ENCODE measurements at regions of chr9 and their contacts with region 1.

Region 1: GRCh38 chr9:37784616-37785483 is at the start of gene EXOSC3:
- DNase-seq: peak; percentile 84 to 95 (median 92)
- H3K4me3 ChIP-seq: peak within 1 kb of the TSS; percentile 71 to 100 (median 94)
- H3K27ac ChIP-seq: peak within 1 kb of the TSS in 58 of 59 donors; percentile 20 to 93 (median 79)
- H3K27me3 ChIP-seq: peaks cover 0 to 3% (median 0%) of the 10 kb centered on the region in 45 donors
- CTCF ChIP-seq: peak in 37 of 56 donors; percentile 6 to 59 (median 23)
- total RNA-seq, gene EXOSC3: 23.5 to 65.0 (median 36.8) TPM

Region 2: DNA sequence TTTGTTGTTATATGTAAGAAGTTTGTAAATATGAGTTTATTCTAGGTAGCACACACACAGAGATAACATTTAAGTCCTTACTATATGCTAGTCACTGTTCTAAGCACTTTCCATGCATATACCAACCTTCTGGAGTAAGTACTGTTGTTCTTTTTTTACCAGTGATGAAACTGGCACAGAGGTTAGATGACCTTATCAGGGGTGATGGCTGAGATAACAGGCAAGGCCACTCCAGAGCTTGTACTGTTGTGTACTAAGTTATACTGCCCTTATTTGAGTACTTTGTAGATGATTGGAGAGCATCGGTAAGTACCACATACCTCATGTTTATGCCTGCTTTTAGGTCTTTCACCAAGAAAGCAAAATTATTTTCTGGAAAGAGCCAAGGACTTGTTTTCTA is 292.9 kb before region 1 on chr9:
- intact Hi-C with region 1: loop called in 1 of 2 experiments (anchors 5 kb)
- DNase-seq: no peak
- H3K4me3 ChIP-seq: no peak overlapping the region
- H3K27ac ChIP-seq: no peak overlapping the region
- H3K27me3 ChIP-seq: no peaks in the 10 kb centered on the region
- CTCF ChIP-seq: no peak

Region 3: DNA sequence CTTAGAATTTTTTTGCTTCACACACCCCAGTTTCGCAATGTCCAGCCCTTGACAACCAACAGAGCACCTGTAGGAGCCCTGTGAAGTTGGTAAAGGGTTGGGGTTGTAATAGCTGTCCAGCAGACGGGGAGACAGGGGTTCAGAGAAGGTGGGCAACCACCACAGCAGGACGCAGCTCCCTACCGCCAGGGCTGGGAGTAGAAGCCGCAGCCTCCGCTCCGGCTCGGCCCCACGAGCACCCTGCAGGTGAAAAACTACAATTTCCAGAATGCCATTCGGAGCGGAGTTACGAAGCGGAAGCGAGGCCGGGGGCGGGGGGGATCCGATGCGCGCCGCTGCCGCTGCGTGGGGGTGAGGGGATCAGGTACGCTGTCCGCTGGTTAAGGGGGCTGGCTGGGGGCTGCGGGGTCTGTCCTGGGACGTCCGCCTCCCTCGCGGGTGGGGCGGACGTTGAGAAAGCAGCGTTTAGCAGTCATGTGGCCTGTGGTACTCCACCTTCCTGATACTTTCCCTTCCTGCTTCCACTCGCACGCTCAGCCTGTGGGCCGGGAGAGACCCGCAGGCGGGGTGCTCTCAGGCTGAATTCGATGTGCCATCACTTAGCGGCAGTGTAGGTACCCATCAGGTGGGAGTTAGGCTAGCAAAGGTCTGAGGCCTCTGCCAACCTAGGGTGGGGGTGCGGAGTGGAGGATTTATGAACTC is 31.2 kb before region 1 on chr9 and contains the start of gene TRMT10B:
- intact Hi-C with region 1: loop called in 1 of 2 experiments (anchors 5 kb)
- DNase-seq: peak; percentile 50 to 81 (median 63)
- H3K4me3 ChIP-seq: peak within 1 kb of the TSS; percentile 53 to 97 (median 86)
- H3K27ac ChIP-seq: peak within 1 kb of the TSS in 52 of 59 donors; percentile 7 to 89 (median 65)
- H3K27me3 ChIP-seq: no peaks in the 10 kb centered on the region
- CTCF ChIP-seq: peak in 30 of 56 donors; percentile 6 to 35 (median 19)
- total RNA-seq, gene TRMT10B: 7.8 to 20.2 (median 13.0) TPM

Region 4: GRCh38 chr9:37800631-37801286 is 15.9 kb after region 1 on chr9 and contains the start of gene DCAF10:
- intact Hi-C with region 1: loop called (anchors 1 to 2 kb)
- DNase-seq: peak; percentile 70 to 93 (median 84)
- H3K4me3 ChIP-seq: peak within 1 kb of the TSS; percentile 58 to 99 (median 93)
- H3K27ac ChIP-seq: peak within 1 kb of the TSS in 55 of 59 donors; percentile 43 to 91 (median 80)
- H3K27me3 ChIP-seq: no peaks in the 10 kb centered on the region
- CTCF ChIP-seq: peak in 41 of 56 donors; percentile 12 to 55 (median 33)
- total RNA-seq, gene DCAF10: 17.1 to 40.1 (median 27.8) TPM

Region 5: GRCh38 chr9:38284588-38285051 is 499.8 kb after region 1 on chr9:
- intact Hi-C with region 1: no loop called
- DNase-seq: no peak
- H3K4me3 ChIP-seq: no peak overlapping the region
- H3K27ac ChIP-seq: no peak overlapping the region
- H3K27me3 ChIP-seq: peaks cover 0 to 3% (median 0%) of the 10 kb centered on the region in 45 donors
- CTCF ChIP-seq: no peak

Measured in dorsolateral prefrontal cortex (tissue), 120 donors.